ENCODE measurements at regions of chr13 and their contacts with region 1.

Region 1: DNA sequence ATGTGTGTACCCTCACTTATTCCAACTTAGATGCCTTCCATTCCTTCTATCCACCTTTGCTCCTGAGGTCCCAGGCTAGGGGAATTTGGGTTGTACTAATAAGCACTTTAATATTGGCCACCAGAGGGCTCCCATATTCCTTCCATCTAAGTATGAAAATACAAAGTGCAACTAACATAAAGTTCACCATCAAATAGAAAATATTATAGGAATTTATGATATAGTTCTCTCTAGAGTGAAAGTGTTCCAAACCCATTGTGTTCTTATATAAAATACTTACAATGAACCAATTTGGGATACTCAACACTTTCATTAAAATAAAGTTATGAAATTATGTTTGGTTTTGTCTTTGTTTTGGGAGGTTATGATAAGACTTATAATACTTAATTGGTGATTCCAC is 62.3 kb downstream of the ITGBL1 start:
- DNase-seq: peak; percentile 19
- ATAC-seq: no peak
- H3K4me3 Mint-ChIP-seq: no peak overlapping the region
- H3K27ac Mint-ChIP-seq: no peak overlapping the region
- H3K4me1 Mint-ChIP-seq: no peaks in the 10 kb centered on the region
- H3K27me3 Mint-ChIP-seq: peaks cover 3% of the 10 kb centered on the region

Region 2: DNA sequence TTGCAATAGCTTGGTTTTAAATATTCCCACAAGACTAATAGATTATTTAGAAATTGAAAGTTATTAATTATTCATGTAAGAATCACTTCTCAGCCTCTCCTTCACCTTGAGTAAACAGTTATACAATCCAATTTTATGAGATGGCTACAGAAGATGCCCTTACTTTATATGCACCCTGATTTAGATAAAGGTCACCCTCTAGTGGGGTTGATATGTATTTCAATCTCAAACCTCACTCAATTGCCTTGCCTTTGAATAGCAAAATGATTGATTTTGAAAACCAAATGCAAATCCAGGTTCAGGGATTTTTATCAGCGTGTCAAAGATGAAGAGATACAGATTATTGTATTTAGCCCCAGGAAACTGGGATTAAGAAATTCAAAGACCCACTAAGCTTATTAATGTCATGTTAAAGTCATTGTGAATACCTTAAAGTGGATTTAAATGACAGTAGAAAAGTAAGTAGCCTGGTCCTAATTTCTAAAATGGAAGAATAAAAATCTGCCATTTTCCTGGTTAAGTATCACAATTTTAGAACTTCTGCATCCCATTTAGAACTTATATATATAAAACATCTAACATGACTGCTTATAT is 242.8 kb after region 1 on chr13:
- CTCF ChIA-PET with region 1: interaction called, 11 read pairs
- POLR2A ChIA-PET with region 1: no interaction called
- intact Hi-C with region 1: loop called (anchors 1 kb)
- DNase-seq: no peak
- ATAC-seq: peak; percentile 36
- H3K4me3 Mint-ChIP-seq: no peak overlapping the region
- H3K27ac Mint-ChIP-seq: no peak overlapping the region
- H3K4me1 Mint-ChIP-seq: no peaks in the 10 kb centered on the region
- H3K27me3 Mint-ChIP-seq: peaks cover 11% of the 10 kb centered on the region

Region 3: DNA sequence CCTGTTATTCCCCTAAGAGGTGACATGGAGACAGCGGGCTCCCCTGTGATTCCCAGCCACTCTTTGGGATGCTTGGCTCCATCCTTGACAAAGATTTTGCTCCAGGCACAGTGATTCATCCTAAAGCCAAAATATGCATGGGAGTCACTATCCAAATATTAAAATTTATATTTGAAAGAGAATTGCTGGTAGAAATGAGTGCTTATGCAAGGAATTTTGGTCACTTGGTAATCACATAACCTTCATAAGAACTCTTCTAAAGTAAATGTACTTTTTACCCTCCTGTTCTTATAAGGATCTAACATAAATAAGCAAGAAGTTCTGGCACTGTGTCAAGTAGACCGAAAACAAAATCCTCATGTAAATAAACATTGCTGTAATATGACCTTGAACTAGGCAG is 323.5 kb after region 1 on chr13:
- CTCF ChIA-PET with region 1: no interaction called
- POLR2A ChIA-PET with region 1: no interaction called
- intact Hi-C with region 1: no loop called
- DNase-seq: no peak
- ATAC-seq: no peak
- H3K4me3 Mint-ChIP-seq: no peak overlapping the region
- H3K27ac Mint-ChIP-seq: no peak overlapping the region
- H3K4me1 Mint-ChIP-seq: no peaks in the 10 kb centered on the region
- H3K27me3 Mint-ChIP-seq: peaks cover 2% of the 10 kb centered on the region

Region 4: DNA sequence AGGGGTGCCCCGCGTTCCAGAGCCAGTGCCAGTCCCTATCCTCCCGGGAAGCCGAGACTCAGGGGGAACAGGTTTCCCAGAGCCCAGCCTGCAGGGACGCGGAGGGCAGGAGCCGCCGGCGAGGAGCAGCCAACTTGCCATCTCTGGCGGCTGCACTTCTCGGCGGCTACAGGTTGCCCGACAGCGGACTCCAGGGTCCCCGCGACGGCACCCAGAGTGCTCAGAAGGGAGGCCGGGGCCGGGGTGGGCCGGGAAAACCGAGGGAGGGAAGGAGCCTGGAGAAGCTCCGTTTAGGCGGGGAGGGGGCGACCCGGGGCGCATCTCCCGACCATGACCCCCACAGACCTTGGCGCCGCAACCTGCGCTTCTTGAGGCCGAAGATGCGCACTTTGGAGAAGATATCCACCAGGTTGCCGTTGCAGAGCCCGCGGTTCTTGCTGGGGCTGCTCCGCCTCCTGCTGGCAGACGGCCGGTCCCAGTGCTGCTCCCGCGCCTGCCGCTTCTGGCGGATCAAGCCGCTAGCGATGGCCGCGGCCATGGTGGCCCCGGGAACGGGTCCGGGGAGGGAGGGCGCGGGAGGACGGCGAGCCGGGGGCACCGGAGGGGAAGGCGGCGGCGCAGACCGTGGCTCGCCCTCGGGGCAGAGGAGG is 401.4 kb after region 1 on chr13:
- CTCF ChIA-PET with region 1: no interaction called
- POLR2A ChIA-PET with region 1: no interaction called
- intact Hi-C with region 1: loop called in 1 of 2 experiments (anchors 10 kb)
- DNase-seq: peak; percentile 32
- ATAC-seq: no peak
- H3K4me3 Mint-ChIP-seq: no peak overlapping the region
- H3K27ac Mint-ChIP-seq: no peak overlapping the region
- H3K4me1 Mint-ChIP-seq: no peaks in the 10 kb centered on the region
- H3K27me3 Mint-ChIP-seq: peaks cover 42% of the 10 kb centered on the region

Region 5: DNA sequence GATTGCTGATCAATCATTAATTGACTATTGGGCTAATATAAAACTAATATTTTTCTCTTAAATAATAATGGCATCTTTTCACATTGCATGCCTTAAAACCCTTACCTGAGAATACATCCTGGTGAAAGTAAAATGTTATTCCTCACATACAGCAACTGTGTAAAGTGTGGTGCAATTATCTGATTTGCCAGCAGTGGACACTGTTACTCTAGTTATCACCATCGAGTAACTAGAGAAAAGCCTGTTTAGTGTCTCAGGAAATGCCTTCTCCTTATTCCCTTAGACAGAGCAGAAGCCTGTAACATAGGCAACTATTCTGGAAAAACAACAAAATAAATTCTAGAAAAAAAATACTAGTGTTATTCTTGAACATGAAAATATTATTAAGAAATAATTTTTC is 427.2 kb after region 1 on chr13:
- CTCF ChIA-PET with region 1: no interaction called
- POLR2A ChIA-PET with region 1: no interaction called
- intact Hi-C with region 1: loop called in 1 of 2 experiments (anchors 10 kb)
- DNase-seq: no peak
- ATAC-seq: no peak
- H3K4me3 Mint-ChIP-seq: no peak overlapping the region
- H3K27ac Mint-ChIP-seq: no peak overlapping the region
- H3K4me1 Mint-ChIP-seq: no peaks in the 10 kb centered on the region
- H3K27me3 Mint-ChIP-seq: peaks cover 9% of the 10 kb centered on the region